ENCODE measurements at regions of chr17 and their contacts with region 1.

Region 1: DNA sequence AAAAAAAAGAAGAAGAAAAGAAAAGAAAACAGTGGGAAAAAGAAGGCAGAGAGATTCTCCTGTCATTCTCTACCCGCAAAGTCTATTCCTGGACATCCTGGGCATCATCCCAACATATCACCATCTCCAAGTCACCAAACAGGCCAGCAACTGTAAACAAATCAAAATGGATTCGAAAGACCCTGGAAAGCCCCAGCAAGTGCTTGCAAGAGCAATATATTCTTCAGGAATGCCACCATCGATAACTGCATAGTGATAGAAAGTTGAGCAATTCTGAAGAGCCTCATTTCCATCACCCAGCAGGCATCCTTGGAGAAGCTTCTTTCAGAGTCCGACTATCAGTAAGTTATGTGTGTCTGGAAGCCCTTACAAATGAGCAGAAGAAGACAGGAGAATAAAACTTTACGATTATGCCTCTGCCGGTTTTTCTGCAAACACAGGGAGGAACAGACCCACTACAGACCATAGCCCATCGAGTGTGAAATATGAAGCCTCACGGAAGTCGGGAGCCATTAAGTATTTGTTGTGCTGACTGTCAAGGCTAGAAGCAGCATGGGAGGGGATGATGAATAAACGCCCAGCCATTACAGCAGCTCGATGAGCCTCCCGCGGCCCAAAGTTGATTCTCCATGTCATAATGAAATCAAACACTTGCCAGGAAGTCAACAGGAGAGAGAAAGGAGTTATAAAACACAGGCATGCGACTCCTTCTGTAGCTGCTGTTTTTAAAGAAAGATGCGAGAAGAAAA is 64.5 kb upstream of the SEC14L1 start:
- DNase-seq: no peak
- H3K4me3 ChIP-seq: no peak overlapping the region
- CTCF ChIP-seq: no peak

Region 2: DNA sequence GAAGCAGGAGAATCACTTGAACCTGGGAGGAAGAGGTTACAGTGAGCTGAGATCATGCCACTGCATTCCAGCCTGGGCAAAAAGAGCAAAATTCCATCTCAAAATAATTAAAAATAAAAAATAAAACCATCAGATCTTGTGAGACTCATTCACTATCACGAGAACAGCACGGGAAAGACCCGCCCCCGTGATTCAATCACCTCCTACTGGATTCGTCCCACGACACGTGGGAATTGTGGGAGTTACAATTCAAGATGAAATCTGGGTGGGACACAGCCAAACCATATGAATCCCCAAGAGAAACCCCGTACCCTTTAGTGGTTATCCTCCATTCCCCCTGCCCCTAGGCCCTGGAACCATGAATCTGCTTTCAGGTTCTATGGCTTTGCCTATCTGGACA is 223.5 kb before region 1 on chr17:
- in situ Hi-C with region 1: loop called (anchors 10 kb)
- DNase-seq: no peak
- H3K4me3 ChIP-seq: no peak overlapping the region
- CTCF ChIP-seq: no peak

Region 3: GRCh38 chr17:77118251-77118928 is 42.1 kb after region 1 on chr17:
- in situ Hi-C with region 1: no loop called
- DNase-seq: no peak
- H3K4me3 ChIP-seq: no peak overlapping the region
- CTCF ChIP-seq: no peak